ENCODE measurements at regions of chr4 and their contacts with region 1.

Region 1: DNA sequence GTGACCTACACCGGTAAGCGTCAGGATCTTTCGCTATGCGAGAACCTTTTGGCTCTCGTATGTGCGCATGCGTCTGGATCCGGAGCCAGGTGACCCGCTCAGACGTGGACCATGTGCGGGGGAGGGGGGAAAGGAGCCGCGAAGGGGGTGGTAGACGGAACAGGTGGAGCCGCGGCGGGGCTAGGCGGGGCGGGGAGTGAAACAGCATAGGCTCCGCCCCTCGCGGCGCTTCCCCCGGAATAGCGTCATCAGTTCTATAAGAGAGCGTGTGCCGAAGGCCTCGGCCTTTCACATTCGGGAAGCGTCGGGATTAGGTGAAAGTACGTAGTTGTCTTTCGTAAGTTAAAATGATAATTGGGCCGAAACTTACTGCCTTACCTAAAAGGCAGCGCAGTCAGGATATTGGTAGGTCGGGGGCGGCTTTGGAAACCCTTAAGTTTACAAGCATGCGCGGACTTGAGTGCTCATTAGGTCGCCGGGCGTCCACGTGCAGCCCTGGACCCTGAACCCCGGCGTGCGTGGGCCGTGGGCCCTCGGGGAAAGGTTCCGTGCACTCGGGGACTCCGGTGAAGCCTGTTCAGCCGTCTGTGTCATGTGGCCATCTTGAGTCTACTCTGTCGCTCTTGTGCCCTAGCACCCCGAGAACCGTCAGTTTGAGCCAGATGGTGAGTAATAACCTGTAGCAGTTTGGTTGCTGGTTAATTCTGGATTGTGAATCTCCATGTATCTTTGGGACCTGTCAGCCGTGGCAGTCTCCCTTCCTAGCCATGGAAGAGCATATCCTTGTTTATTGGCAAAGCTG is 74.1 kb downstream of the PRSS12 start:
- DNase-seq: peak; percentile 97 to 98
- H3K4me3 ChIP-seq: peak overlapping the region; percentile 87
- H3K4me3 Mint-ChIP-seq: peak overlapping the region; percentile 96
- H3K27ac Mint-ChIP-seq: peak overlapping the region; percentile 98
- H3K4me1 ChIP-seq: peaks cover 34% of the 10 kb centered on the region
- H3K4me1 Mint-ChIP-seq: peaks cover 5% of the 10 kb centered on the region
- H3K27me3 ChIP-seq: no peaks in the 10 kb centered on the region
- H3K27me3 Mint-ChIP-seq: no peaks in the 10 kb centered on the region
- CTCF ChIP-seq: no peak

Region 2: GRCh38 chr4:117495802-117496201 is 782.9 kb before region 1 on chr4:
- CTCF ChIA-PET with region 1: no interaction called
- POLR2A ChIA-PET with region 1: no interaction called
- intact Hi-C with region 1: no loop called
- DNase-seq: no peak
- H3K4me3 ChIP-seq: no peak overlapping the region
- H3K4me3 Mint-ChIP-seq: no peak overlapping the region
- H3K27ac Mint-ChIP-seq: no peak overlapping the region
- H3K4me1 ChIP-seq: no peaks in the 10 kb centered on the region
- H3K4me1 Mint-ChIP-seq: peaks cover 7% of the 10 kb centered on the region
- H3K27me3 ChIP-seq: no peaks in the 10 kb centered on the region
- H3K27me3 Mint-ChIP-seq: no peaks in the 10 kb centered on the region
- CTCF ChIP-seq: no peak

Region 3: GRCh38 chr4:118102195-118102594 is 176.5 kb before region 1 on chr4:
- CTCF ChIA-PET with region 1: no interaction called
- POLR2A ChIA-PET with region 1: no interaction called
- intact Hi-C with region 1: no loop called
- DNase-seq: no peak
- H3K4me3 ChIP-seq: no peak overlapping the region
- H3K4me3 Mint-ChIP-seq: no peak overlapping the region
- H3K27ac Mint-ChIP-seq: no peak overlapping the region
- H3K4me1 ChIP-seq: no peaks in the 10 kb centered on the region
- H3K4me1 Mint-ChIP-seq: no peaks in the 10 kb centered on the region
- H3K27me3 ChIP-seq: no peaks in the 10 kb centered on the region
- H3K27me3 Mint-ChIP-seq: no peaks in the 10 kb centered on the region
- CTCF ChIP-seq: no peak

Region 4: DNA sequence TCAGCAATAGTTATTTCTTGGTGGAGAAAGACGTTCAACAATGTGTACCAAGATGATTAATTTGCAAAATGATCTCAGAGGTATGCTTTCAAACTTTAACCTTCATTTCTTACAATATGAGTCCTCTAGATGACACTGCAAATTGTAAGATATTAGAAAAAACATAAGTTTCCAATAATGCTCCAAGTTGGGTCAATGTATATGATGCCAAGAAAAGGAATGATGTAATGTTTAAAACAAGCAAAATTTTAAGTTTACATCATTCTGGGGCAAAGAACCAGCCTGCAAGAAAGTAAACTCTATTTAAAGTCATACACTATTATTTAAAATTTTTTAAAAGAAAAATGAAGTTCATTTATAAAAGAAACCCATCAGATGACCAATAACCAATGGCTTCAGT is 18.1 kb after region 1 on chr4:
- CTCF ChIA-PET with region 1: no interaction called
- POLR2A ChIA-PET with region 1: no interaction called
- intact Hi-C with region 1: no loop called
- DNase-seq: no peak
- H3K4me3 ChIP-seq: no peak overlapping the region
- H3K4me3 Mint-ChIP-seq: no peak overlapping the region
- H3K27ac Mint-ChIP-seq: no peak overlapping the region
- H3K4me1 ChIP-seq: no peaks in the 10 kb centered on the region
- H3K4me1 Mint-ChIP-seq: no peaks in the 10 kb centered on the region
- H3K27me3 ChIP-seq: no peaks in the 10 kb centered on the region
- H3K27me3 Mint-ChIP-seq: no peaks in the 10 kb centered on the region
- CTCF ChIP-seq: no peak

Region 5: DNA sequence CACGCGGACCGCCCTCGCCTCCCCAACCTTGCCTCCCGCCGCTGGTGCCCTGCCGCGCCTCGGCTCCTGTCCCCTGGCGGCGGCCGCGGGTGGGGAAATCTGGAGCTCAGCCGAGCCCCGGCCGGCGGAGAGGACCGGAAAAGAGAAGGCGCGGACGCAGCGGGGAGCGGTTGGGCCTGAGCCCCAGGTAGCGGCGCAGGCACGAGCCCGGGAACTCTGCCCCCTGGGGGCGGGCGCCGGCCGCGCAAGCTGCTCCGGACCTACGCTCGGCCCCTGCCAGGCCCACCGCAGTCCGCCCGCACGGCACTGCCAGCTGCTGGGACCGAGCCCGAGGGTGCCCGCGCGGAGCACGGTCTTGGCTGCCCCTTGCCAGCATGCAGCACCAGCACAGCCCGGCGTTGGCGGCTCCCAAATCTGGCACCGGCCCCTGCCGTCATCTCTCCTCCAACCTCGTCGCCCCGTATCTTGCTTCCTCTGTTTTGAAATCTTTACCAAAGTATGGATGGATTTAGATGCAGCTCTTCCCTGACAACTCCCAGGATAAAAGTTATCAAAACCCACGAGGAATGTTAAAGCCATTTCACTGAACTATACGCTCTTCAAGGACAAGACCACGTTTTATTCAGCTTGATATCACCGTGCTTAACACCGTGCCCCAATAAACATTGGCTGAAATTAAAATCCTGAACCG is 74.3 kb after region 1 on chr4 and contains the start of gene PRSS12:
- CTCF ChIA-PET with region 1: interaction called, 5 read pairs
- POLR2A ChIA-PET with region 1: interaction called, 5 read pairs
- intact Hi-C with region 1: loop called (anchors 1 kb)
- DNase-seq: peak; percentile 60 to 82
- H3K4me3 ChIP-seq: peak within 1 kb of the TSS; percentile 33
- H3K4me3 Mint-ChIP-seq: peak within 1 kb of the TSS; percentile 79
- H3K27ac Mint-ChIP-seq: no peak within 1 kb of the TSS
- H3K4me1 ChIP-seq: peaks cover 3% of the 10 kb centered on the region; the same call in 1 of the 2 replicates
- H3K4me1 Mint-ChIP-seq: no peaks in the 10 kb centered on the region
- H3K27me3 ChIP-seq: no peaks in the 10 kb centered on the region; the same call in 1 of the 2 replicates
- H3K27me3 Mint-ChIP-seq: peaks cover 18% of the 10 kb centered on the region
- CTCF ChIP-seq: peak; percentile 51 to 71
- total RNA-seq, gene PRSS12: 0.25 and 1.6 TPM in 2 replicates

Region 6: GRCh38 chr4:118684873-118685811 is 406.5 kb after region 1 on chr4 and contains the start of gene METTL14:
- CTCF ChIA-PET with region 1: no interaction called
- POLR2A ChIA-PET with region 1: no interaction called
- intact Hi-C with region 1: loop called (anchors 5 kb)
- DNase-seq: peak; percentile 92
- H3K4me3 ChIP-seq: peak within 1 kb of the TSS; percentile 73
- H3K4me3 Mint-ChIP-seq: peak within 1 kb of the TSS; percentile 95
- H3K27ac Mint-ChIP-seq: peak within 1 kb of the TSS; percentile 96
- H3K4me1 ChIP-seq: peaks cover 4% of the 10 kb centered on the region; the same call in 1 of the 2 replicates
- H3K4me1 Mint-ChIP-seq: peaks cover 12% of the 10 kb centered on the region
- H3K27me3 ChIP-seq: no peaks in the 10 kb centered on the region
- H3K27me3 Mint-ChIP-seq: no peaks in the 10 kb centered on the region
- CTCF ChIP-seq: peak in 1 of 2 experiments; percentile 21
- total RNA-seq, gene METTL14: 46.7 and 51.8 TPM in 2 replicates